ENCODE measurements at regions of chr5 and their contacts with region 1.

Region 1: GRCh38 chr5:132064738-132065331 is 4.4 kb downstream of the IL3 start:
- DNase-seq: peak; percentile 84
- CTCF ChIP-seq: peak; percentile 94

Region 2: DNA sequence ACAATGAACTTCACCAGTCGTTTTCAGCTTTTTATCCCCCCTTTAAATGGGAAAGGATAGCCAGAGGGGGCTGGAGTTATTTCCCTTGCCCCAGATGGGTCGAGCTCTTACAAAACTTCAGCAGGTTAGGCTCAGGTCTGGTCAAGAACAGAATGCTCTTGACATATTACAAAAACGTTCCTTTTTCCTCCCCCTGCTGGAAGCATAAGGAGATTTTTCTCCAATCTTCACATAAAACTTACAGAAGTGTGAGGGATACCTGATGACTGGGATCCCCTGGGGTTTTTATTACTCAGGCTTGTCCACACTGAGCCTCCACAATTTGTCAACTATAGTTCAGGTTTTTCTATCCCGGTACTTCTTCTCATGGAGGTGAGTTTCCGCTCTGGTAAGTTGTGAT is 69.5 kb after region 1 on chr5:
- in situ Hi-C with region 1: loop called (anchors 10 kb)
- DNase-seq: no peak
- CTCF ChIP-seq: no peak

Region 3: DNA sequence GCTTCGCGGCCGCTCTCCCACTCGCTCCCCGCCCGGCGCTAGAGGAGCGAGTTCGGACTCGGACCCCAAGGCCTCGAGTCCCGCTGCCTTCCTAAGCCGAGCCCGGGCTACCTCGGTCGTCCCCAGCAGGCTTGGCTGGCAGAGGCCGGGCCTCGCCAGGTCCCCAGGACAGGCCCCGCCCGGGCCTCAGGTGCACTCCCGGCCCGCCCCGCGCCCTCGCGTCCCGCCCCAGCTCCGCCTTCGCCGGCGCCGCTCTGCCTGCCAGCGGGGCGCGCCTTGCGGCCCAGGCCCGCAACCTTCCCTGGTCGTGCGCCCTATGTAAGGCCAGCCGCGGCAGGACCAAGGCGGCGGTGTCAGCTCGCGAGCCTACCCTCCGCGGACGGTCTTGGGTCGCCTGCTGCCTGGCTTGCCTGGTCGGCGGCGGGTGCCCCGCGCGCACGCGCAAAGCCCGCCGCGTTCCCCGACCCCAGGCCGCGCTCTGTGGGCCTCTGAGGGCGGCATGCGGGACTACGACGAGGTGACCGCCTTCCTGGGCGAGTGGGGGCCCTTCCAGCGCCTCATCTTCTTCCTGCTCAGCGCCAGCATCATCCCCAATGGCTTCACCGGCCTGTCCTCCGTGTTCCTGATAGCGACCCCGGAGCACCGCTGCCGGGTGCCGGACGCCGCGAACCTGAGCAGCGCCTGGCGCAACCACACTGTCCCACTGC is 304.8 kb after region 1 on chr5 and contains the start of gene SLC22A5:
- in situ Hi-C with region 1: loop called (anchors 25 kb)
- DNase-seq: peak; percentile 88
- CTCF ChIP-seq: no peak

Measured in GM13977 (cell line).